K562 (cell line): ENCODE measurements at regions of chr7 and their contacts with region 1.

Region 1: DNA sequence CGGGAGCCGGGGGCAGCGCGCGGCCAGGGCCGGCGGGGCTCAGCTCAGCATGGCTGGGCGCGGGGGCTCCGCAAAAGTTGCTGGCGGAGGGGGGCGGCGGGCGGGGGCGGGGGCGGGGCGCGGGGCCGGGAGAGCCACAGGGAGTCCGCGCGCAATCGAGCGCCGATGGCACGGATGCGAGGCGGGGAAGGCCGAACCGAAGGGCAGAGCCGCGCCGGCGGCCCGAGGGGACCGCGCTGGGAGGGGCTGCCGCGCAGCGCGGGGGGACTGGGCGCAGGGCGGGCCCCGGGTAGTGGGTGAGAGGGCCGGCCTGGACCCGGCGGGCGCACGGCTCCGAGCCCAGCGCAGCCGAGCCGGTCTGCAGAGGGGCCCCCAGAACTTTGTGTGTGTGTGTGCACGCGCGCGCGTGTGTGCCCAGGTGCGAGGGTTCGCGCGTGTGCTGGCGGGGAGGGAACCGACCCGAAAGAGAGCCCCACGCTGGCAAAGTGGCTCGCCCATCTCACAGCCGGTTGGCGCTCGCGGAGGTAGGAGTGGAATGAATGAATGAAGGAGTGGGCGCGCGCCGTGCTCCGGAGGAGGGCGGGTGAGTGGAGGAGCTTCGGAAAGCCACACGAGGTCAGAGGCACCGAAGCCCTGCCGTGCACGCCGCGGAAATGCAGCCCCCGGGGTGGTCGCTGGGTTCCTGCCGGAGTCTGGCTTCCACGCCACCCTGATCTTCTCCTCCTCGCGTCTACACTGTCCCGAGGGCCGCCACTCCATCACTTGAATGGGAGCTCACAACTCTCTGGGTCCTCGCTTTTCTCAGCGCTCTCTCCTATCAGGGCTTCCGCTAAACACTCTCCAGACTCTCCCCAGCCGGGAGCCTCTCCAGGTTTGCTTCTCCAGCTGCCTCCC is at the start of gene HIPK2:
- DNase-seq: peak; percentile 90 to 99 (median 96)
- ATAC-seq: peak; percentile 87
- H3K4me3 ChIP-seq: peak within 1 kb of the TSS; percentile 70
- H3K27ac ChIP-seq: peak within 1 kb of the TSS; percentile 62
- H3K4me1 ChIP-seq: peaks cover 14 to 15% of the 10 kb centered on the region in 2 experiments; a peak in 4 of 5 replicates
- H3K27me3 ChIP-seq: peaks cover 6 to 30% of the 10 kb centered on the region in 2 experiments; a peak in 4 of 5 replicates
- CTCF ChIP-seq: no peak
- EP300 ChIP-seq: no peak
- POLR2A ChIP-seq: peak; percentile 46; the same call in 1 of the 2 replicates
- RAD21 ChIP-seq: no peak
- polyA plus RNA-seq, gene HIPK2: 0.69 to 1.6 TPM

Region 2: DNA sequence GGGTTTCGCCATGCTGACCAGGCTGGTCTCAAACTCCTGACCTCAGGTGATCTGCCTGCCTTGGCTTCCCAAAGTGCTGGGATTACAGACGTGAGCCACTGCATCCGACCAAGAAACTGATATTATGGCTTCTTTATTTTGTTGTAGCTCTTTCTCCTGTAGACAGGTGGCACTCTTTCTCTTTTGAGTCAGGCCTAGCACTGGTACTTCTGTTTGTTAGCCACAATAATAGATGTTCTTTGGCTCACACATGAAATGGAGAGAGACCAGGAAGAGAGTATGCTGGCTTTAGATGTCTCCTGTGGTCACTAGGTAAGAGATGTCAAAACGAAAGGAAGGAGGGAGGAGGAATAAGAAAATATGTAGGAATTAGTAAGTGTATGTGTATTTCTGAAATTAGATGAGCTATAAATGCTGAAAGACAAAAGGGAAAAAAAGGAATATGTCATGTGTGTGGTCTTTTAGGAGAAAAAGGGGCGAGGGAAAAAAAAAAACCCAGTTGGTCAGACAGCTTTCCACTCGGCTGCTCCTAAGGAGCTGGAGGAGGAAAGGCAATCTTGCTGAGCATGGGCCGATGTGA is 176.0 kb before region 1 on chr7:
- CTCF ChIA-PET with region 1: no interaction called
- POLR2A ChIA-PET with region 1: no interaction called
- in situ Hi-C with region 1: no loop called
- intact Hi-C with region 1: loop called (anchors 5 kb)
- DNase-seq: peak; percentile 53 to 65 (median 60)
- ATAC-seq: peak; percentile 93
- H3K4me3 ChIP-seq: no peak overlapping the region
- H3K27ac ChIP-seq: no peak overlapping the region
- H3K4me1 ChIP-seq: peaks cover 0 to 9% of the 10 kb centered on the region in 2 experiments; a peak in 3 of 5 replicates
- H3K27me3 ChIP-seq: no peaks in the 10 kb centered on the region
- CTCF ChIP-seq: peak; percentile 68 to 81 (median 69)
- EP300 ChIP-seq: no peak
- POLR2A ChIP-seq: no peak
- RAD21 ChIP-seq: peak; percentile 80 to 89

Region 3: DNA sequence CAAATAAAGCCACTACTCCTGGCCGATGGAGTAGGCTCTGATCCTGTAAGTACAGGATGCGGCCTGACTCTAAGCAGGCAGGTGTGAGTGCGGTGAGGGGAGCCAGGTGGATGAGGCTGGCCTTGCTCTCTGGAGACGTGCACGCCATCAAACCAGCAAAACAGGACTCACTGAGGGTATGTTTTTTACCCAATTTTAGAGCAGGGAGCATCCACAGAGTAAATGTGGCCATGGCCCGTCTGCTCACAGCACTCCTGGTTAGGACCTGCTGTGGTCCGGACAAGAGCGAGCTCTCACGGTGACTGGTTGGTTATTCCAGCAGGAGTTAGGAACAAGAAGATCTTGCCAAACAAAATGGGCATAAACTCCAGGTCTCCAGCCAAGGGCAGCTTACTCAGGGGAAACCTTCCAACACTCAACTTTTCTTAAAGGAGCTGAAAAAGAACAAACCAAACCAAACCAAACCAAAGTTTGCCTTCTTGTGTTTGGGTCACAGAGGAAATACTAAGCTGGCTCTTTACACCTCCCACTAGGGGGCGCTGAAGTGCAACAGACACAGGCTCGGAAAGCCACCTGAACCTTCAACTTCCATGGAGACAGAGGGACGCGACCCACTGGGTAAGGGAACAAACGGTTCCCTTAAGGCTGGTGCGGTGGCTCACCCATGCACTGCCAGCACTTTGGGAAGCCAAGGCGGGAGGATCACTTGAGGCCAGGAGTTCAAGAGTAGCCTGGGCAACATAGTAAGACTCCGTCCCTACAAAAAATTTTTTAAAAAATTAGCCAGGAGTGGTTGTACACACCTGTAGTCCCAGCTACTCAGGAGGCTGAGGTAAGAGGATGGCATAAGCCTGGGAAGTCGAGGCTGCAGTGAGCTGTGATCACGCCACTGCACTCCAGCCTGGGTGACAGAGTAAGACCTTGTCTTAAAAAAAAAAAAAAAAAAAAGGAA is 132.3 kb before region 1 on chr7:
- CTCF ChIA-PET with region 1: no interaction called
- POLR2A ChIA-PET with region 1: no interaction called
- in situ Hi-C with region 1: no loop called
- intact Hi-C with region 1: loop called (anchors 2 kb)
- DNase-seq: peak; percentile 84 to 93 (median 88)
- ATAC-seq: peak; percentile 94
- H3K4me3 ChIP-seq: no peak overlapping the region
- H3K27ac ChIP-seq: no peak overlapping the region
- H3K4me1 ChIP-seq: peaks cover 0 to 3% of the 10 kb centered on the region in 2 experiments; a peak in 2 of 5 replicates
- H3K27me3 ChIP-seq: peaks cover 0 to 3% of the 10 kb centered on the region in 2 experiments; a peak in 1 of 5 replicates
- CTCF ChIP-seq: peak; percentile 93 to 98 (median 98)
- EP300 ChIP-seq: no peak
- POLR2A ChIP-seq: no peak
- RAD21 ChIP-seq: peak; percentile 97 to 98

Region 4: DNA sequence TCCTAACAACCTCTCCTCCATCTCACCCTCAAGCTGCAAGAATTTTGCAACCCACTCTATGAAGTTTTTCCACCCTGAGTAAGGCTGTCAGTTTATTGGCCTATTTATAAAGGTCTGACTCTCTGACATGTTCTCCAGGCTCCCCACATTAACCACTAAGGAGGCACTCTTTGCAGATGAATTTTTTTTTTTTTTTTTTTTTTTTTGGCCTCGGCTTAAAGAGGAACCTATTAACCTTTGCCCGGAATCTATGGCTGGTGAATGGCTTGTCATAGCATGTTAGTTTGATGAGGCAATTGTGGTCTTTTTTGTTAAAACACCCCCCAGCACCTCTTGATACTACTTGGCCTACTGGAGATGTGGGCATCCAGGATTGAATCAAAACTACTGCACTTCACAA is 108.0 kb after region 1 on chr7:
- CTCF ChIA-PET with region 1: no interaction called
- POLR2A ChIA-PET with region 1: interaction called, 7 read pairs
- in situ Hi-C with region 1: no loop called
- intact Hi-C with region 1: loop called (anchors 5 kb)
- DNase-seq: no peak
- ATAC-seq: no peak
- H3K4me3 ChIP-seq: no peak overlapping the region
- H3K27ac ChIP-seq: no peak overlapping the region
- H3K4me1 ChIP-seq: peaks cover 4 to 12% of the 10 kb centered on the region in 2 experiments; a peak in 4 of 5 replicates
- H3K27me3 ChIP-seq: no peaks in the 10 kb centered on the region; a peak in 1 of 5 replicates
- CTCF ChIP-seq: no peak
- EP300 ChIP-seq: no peak
- POLR2A ChIP-seq: no peak
- RAD21 ChIP-seq: no peak

Region 5: GRCh38 chr7:139915864-139916716 is 137.9 kb after region 1 on chr7:
- CTCF ChIA-PET with region 1: no interaction called
- POLR2A ChIA-PET with region 1: interaction called, 3 read pairs
- in situ Hi-C with region 1: no loop called
- intact Hi-C with region 1: loop called (anchors 2 kb)
- DNase-seq: peak; percentile 93 to 99 (median 95)
- ATAC-seq: peak; percentile 87
- H3K4me3 ChIP-seq: no peak overlapping the region
- H3K27ac ChIP-seq: peak overlapping the region; percentile 85
- H3K4me1 ChIP-seq: peaks cover 28 to 69% of the 10 kb centered on the region in 2 experiments
- H3K27me3 ChIP-seq: no peaks in the 10 kb centered on the region
- CTCF ChIP-seq: no peak
- EP300 ChIP-seq: peak; percentile 92
- POLR2A ChIP-seq: peak; percentile 60
- RAD21 ChIP-seq: peak; percentile 1 to 17; a peak in 2 of 4 replicates

Region 6: DNA sequence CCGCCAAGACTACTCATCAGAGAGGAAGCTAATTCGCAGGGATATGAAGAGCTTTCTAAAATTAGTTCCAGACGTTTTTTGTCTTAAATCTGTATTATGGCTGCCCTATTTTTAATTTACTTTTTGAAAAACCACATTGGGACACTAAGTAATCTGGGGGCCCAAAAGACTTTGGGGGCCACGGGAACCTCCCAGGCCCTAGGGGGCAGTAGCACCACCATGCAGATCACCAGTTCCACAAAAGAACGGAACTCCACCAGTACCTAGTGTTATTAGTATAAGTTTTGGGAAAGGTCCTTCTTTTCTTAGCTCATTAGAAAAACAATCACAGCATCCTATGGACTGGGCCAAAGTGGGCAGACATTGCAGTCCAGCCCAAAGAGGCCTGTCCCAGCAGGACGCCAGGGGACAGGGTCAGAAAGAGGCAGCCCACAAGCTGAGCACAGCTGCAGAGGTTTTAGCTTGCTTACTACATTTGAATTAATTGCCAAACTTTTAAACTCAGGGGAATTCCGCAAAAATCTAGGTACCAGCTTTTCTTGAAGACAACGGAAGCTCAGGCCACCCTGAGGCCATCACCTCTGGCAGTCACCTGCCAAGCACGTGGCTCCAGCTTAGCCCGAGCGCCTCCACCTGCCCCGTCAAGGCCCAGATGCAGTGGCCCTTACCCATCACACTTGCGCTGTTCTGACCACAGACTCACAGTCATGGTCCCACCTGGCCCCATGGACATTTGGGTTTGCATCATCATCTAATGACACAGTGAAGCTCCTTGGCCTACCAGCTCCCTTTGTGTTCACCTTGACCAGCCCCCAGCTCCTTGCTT is 209.7 kb after region 1 on chr7:
- CTCF ChIA-PET with region 1: interaction called, 4 read pairs
- POLR2A ChIA-PET with region 1: interaction called, 3 read pairs
- in situ Hi-C with region 1: no loop called
- intact Hi-C with region 1: loop called (anchors 5 kb)
- DNase-seq: no peak
- ATAC-seq: no peak
- H3K4me3 ChIP-seq: no peak overlapping the region
- H3K27ac ChIP-seq: no peak overlapping the region
- H3K4me1 ChIP-seq: peaks cover 0 to 8% of the 10 kb centered on the region in 2 experiments; a peak in 3 of 5 replicates
- H3K27me3 ChIP-seq: peaks cover 2 to 26% of the 10 kb centered on the region in 2 experiments; a peak in 3 of 5 replicates
- CTCF ChIP-seq: peak; percentile 16 to 42 (median 33); a peak in 2 of 6 replicates
- EP300 ChIP-seq: no peak
- POLR2A ChIP-seq: no peak
- RAD21 ChIP-seq: no peak